ENCODE measurements at regions of chr9 and their contacts with region 1.

Region 1: DNA sequence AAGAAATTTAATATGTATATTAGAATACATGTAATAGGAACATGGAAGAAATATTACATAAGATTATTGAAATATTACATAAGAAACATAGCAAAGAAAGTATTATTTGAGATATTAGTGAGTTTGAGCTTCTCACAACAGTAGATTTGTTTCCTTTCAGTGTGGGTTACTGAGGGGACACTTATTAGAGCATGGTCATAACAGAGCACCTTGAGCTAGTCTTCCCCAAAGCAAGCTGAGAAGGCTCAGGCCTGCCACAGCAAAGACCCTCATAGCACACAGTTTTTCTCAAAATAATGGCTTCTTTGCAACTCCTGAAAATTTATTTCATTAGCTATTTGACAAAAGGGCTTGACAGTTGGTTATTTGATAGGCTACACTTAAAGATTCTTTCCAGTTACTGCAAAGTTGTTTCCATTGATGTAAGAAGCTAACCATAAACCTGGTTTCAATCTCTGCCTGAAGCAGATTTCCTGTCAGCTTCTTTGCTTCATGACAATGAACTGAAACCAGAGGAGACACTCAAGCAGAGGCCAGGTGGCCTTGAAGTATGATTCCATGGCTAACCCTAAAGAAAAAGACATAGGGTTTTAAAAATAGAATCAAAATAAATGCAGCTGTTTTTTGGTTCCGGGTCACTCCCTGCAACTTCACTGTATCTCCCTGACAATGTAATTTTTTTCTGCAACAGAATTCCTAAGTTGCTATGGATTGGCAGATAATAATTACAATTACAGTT is 68.6 kb downstream of the ERMP1 start:
- DNase-seq: peak; percentile 55
- H3K4me3 Mint-ChIP-seq: no peak overlapping the region
- H3K27ac Mint-ChIP-seq: peak overlapping the region; percentile 83
- H3K4me1 Mint-ChIP-seq: peaks cover 72% of the 10 kb centered on the region
- H3K27me3 Mint-ChIP-seq: no peaks in the 10 kb centered on the region

Region 2: GRCh38 chr9:4740638-4741364 is 1023.5 kb before region 1 on chr9 and contains the start of gene AK3:
- CTCF ChIA-PET with region 1: no interaction called
- intact Hi-C with region 1: loop called (anchors 10 kb)
- DNase-seq: peak; percentile 90
- H3K4me3 Mint-ChIP-seq: peak within 1 kb of the TSS; percentile 91
- H3K27ac Mint-ChIP-seq: peak within 1 kb of the TSS; percentile 89
- H3K4me1 Mint-ChIP-seq: peaks cover 55% of the 10 kb centered on the region
- H3K27me3 Mint-ChIP-seq: no peaks in the 10 kb centered on the region
- total RNA-seq, gene AK3: 50.2 to 50.9 TPM

Region 3: GRCh38 chr9:5510360-5510931 is 253.9 kb before region 1 on chr9 and contains the start of gene PDCD1LG2:
- CTCF ChIA-PET with region 1: no interaction called
- intact Hi-C with region 1: loop called (anchors 5 kb)
- DNase-seq: peak; percentile 59
- H3K4me3 Mint-ChIP-seq: peak within 1 kb of the TSS; percentile 27
- H3K27ac Mint-ChIP-seq: peak within 1 kb of the TSS; percentile 54
- H3K4me1 Mint-ChIP-seq: peaks cover 31% of the 10 kb centered on the region
- H3K27me3 Mint-ChIP-seq: no peaks in the 10 kb centered on the region
- total RNA-seq, gene PDCD1LG2: 0.10 TPM in 1 of 2 experiments, not detected in the other

Region 4: DNA sequence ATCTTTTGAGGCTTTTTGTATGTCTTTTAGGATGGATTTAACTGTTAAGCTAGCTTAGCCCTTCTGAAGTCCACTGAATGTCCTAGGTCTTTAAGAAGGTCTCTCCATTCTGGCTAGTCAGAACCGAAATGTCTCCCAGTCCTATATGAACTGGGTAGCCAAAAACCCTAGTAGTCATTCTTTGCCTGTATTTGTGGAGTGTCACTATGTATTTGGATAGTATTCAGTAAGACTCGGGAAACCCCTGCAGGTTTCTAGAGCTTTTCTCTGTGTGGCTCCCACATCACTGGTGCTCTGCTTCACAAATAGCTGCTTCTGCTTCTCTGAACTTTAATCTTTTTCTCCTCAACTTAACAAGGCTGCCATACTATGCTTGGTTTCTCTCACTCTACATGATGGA is 67.4 kb before region 1 on chr9:
- CTCF ChIA-PET with region 1: no interaction called
- intact Hi-C with region 1: no loop called
- DNase-seq: peak; percentile 10
- H3K4me3 Mint-ChIP-seq: no peak overlapping the region
- H3K27ac Mint-ChIP-seq: no peak overlapping the region
- H3K4me1 Mint-ChIP-seq: peaks cover 18% of the 10 kb centered on the region
- H3K27me3 Mint-ChIP-seq: no peaks in the 10 kb centered on the region

Region 5: DNA sequence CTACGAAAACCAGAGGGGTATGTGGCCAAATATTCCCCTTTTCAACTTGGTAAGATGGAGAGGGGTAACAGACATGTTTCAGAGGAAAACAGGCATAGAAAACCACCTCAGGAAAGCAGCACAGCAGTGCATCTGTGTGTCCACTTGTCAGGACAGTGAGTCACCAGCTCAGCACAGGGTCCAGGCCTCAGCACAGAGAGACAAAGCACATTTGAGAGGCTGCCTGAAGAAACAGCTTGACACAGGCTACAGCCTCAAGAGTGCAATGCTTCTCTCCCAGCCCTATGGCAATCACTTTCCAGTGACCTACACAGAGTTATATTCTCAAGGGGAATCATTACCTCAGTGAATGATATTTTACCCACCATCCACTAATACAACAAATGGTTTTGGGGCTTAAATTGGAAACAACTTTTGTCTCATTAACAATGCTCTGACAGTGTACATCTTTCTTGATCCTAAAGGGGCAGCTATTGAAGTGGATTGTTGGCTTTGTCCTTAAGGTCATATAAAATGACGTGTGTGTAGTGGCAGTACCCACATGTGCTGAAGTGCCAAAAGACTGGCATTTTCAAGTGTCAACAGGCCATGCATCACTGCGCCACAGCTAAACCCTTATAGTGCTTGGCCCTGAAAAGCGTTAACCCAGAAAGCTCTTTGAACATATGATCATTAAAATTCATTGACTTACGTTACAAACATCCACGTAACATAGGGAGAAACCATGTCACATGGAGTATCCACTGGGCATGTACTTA is 22.2 kb after region 1 on chr9:
- CTCF ChIA-PET with region 1: no interaction called
- intact Hi-C with region 1: loop called (anchors 1 kb)
- DNase-seq: no peak
- H3K4me3 Mint-ChIP-seq: no peak overlapping the region
- H3K27ac Mint-ChIP-seq: peak overlapping the region; percentile 75
- H3K4me1 Mint-ChIP-seq: peaks cover 41% of the 10 kb centered on the region
- H3K27me3 Mint-ChIP-seq: no peaks in the 10 kb centered on the region

Region 6: GRCh38 chr9:5817869-5818268 is 53.6 kb after region 1 on chr9:
- CTCF ChIA-PET with region 1: no interaction called
- intact Hi-C with region 1: no loop called
- DNase-seq: no peak
- H3K4me3 Mint-ChIP-seq: no peak overlapping the region
- H3K27ac Mint-ChIP-seq: no peak overlapping the region
- H3K4me1 Mint-ChIP-seq: no peaks in the 10 kb centered on the region
- H3K27me3 Mint-ChIP-seq: no peaks in the 10 kb centered on the region

Region 7: DNA sequence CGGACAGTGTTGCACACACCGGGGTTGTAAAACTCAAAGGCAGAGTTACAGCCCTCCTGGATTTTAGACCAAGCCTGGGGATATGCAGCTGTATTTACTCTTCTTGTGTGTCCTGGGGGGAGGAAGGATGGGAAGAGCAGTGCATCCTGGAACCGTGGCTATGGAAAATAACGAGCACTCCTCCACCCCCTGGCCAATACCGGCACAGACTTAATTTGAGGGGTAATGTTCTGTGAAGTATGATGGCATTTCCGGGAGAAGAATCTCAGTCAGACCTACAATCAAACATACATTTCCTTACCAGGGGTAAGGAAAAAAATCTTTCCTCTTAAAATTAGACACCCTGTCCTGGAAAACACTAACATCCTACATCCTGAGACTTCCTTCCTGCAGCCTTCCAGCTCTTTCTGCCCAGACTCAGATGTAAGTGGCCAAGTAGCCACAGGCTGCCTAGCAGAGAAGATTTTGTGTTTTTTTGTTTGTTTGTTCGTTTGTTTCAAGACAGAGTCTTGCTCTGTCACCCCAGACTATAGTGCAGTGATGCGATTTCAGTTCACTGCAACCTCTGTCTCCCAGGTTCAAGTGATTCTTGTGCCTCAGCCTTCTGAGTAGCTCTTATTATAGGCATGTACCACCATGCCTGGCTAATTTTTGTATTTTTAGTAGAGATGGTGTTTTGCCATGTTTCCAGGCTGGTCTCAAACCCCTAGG is 79.7 kb after region 1 on chr9:
- CTCF ChIA-PET with region 1: no interaction called
- intact Hi-C with region 1: loop called (anchors 2 kb)
- DNase-seq: peak; percentile 39
- H3K4me3 Mint-ChIP-seq: peak overlapping the region; percentile 33
- H3K27ac Mint-ChIP-seq: peak overlapping the region; percentile 74
- H3K4me1 Mint-ChIP-seq: peaks cover 57% of the 10 kb centered on the region
- H3K27me3 Mint-ChIP-seq: no peaks in the 10 kb centered on the region

Region 8: GRCh38 chr9:5851445-5851844 is 87.1 kb after region 1 on chr9:
- CTCF ChIA-PET with region 1: no interaction called
- intact Hi-C with region 1: loop called (anchors 1 kb)
- DNase-seq: peak; percentile 73
- H3K4me3 Mint-ChIP-seq: no peak overlapping the region
- H3K27ac Mint-ChIP-seq: peak overlapping the region; percentile 26
- H3K4me1 Mint-ChIP-seq: peaks cover 41% of the 10 kb centered on the region
- H3K27me3 Mint-ChIP-seq: no peaks in the 10 kb centered on the region

Region 9: DNA sequence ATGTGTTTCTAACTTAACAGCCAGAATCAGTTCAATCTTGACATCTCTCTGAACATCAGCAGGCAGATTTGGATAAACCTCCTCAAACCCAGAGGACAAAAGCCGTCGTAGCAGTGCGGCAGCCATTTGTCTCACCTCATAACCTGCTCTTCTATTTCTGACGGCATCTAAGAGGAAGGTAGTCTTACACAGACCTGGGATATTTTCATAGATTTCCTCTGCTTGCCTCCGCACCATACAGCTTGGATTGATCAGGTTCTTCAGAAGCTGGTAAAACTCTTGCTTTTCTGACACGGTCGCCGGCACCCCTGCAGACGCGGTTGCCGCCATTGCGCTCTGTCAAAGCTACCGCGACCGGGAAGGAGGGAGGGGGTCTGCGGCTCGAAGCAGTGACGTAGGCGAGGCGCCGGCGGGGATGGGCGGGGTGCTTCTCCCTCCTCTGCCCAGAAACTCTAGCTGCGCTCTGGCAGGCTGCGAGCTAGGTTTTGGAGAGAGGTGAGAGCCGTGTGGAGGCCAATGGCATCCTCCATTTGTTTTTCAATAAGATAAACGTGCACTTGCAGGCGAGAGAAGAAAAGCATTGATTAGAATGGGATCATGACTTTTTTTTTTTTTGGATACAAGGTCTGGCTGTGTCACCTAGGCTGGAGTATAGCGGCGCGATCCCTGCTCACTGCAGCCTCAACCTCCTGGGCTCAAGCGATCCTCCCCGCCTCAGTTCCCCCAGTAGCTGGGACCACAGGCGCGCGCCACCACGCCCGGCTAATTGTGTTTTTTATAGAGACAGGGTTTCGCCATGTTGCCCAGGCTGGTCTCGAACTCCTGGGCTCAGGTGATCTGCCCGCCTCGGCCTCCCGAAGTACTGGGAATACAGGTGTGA is 251.2 kb after region 1 on chr9 and contains the start of gene RANBP6:
- CTCF ChIA-PET with region 1: no interaction called
- intact Hi-C with region 1: loop called (anchors 2 kb)
- DNase-seq: peak; percentile 95
- H3K4me3 Mint-ChIP-seq: peak within 1 kb of the TSS; percentile 98
- H3K27ac Mint-ChIP-seq: peak within 1 kb of the TSS; percentile 99
- H3K4me1 Mint-ChIP-seq: peaks cover 42% of the 10 kb centered on the region
- H3K27me3 Mint-ChIP-seq: no peaks in the 10 kb centered on the region
- total RNA-seq, gene RANBP6: 19.0 to 19.5 TPM

Measured in activated naive CD4-positive, alpha-beta T cell treated with anti-CD3 and anti-CD28 coated beads for 36 hours (primary cell).